ENCODE measurements at regions of chr2 and their contacts with region 1.

Region 1: GRCh38 chr2:119407430-119408220 is 24.0 kb upstream of the TMEM37 start:
- DNase-seq: peak; percentile 58
- ATAC-seq: peak; percentile 97
- H3K4me3 ChIP-seq: no peak overlapping the region
- H3K27ac ChIP-seq: no peak overlapping the region
- H3K4me1 ChIP-seq: no peaks in the 10 kb centered on the region
- H3K27me3 ChIP-seq: no peaks in the 10 kb centered on the region; the same call in 1 of the 2 replicates
- CTCF ChIP-seq: peak; percentile 91
- POLR2A ChIP-seq: no peak
- RAD21 ChIP-seq: peak; percentile 85

Region 2: DNA sequence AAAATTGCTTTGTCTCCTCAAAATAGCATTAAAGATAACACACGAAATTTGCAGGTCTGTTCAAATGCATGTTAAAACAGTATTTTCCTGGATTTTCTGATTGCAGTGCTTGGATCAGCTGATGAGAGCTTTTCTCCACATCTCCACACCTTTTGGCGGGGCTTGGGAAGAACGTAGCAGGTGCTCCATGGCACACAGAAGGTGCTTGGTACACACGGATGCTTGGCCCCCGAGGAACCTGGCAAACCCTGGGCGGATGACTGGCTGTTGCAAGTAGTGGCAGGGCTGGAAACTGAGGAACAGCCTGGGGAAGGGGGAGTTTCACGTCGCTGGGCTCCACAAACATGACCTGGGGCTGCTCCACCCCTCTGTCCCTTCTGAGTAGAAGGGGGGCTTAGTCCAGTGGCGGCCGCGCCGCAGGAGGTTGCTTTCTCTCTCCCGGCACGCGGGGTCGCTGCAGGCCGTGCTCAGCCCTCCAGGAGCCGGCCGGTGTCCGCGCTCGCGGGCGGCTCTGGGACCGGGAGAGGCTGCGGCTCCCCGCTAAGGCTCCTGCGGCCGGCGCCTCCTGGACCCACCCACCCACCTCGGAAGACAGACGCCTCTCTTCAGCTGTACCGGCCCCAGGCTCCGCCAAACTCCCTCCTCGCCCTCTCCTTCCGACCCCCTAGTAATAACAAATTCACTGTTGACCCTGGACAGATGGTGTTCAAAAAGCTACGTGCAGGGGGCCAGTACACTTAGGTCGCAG is 396.3 kb before region 1 on chr2:
- CTCF ChIA-PET with region 1: no interaction called
- POLR2A ChIA-PET with region 1: no interaction called
- dilution Hi-C with region 1: no loop called
- in situ Hi-C with region 1: no loop called
- intact Hi-C with region 1: loop called (anchors 5 kb)
- DNase-seq: peak; percentile 5
- ATAC-seq: peak; percentile 99
- H3K4me3 ChIP-seq: no peak overlapping the region
- H3K27ac ChIP-seq: no peak overlapping the region
- H3K4me1 ChIP-seq: no peaks in the 10 kb centered on the region
- H3K27me3 ChIP-seq: peaks cover 5% of the 10 kb centered on the region
- CTCF ChIP-seq: peak; percentile 67
- POLR2A ChIP-seq: no peak
- RAD21 ChIP-seq: peak; percentile 82

Region 3: GRCh38 chr2:120064664-120065063 is 657.0 kb after region 1 on chr2:
- CTCF ChIA-PET with region 1: no interaction called
- POLR2A ChIA-PET with region 1: no interaction called
- dilution Hi-C with region 1: no loop called
- in situ Hi-C with region 1: no loop called
- intact Hi-C with region 1: no loop called
- DNase-seq: peak; percentile 12
- ATAC-seq: peak; percentile 59
- H3K4me3 ChIP-seq: no peak overlapping the region
- H3K27ac ChIP-seq: no peak overlapping the region; the same call in 1 of the 2 replicates
- H3K4me1 ChIP-seq: peaks cover 5% of the 10 kb centered on the region; the same call in 1 of the 2 replicates
- H3K27me3 ChIP-seq: no peaks in the 10 kb centered on the region
- CTCF ChIP-seq: no peak
- POLR2A ChIP-seq: no peak
- RAD21 ChIP-seq: no peak

Measured in IMR-90 (cell line).